ENCODE measurements at regions of chr1 and their contacts with region 1.

Region 1: GRCh38 chr1:15668089-15668754 is 15.9 kb upstream of the PLEKHM2 start:
- DNase-seq: no peak
- ATAC-seq: no peak
- H3K4me3 ChIP-seq: no peak overlapping the region
- H3K27ac ChIP-seq: no peak overlapping the region
- H3K4me1 ChIP-seq: peaks cover 0 to 15% (median 5%) of the 10 kb centered on the region in 9 donors
- H3K27me3 ChIP-seq: no peaks in the 10 kb centered on the region
- CTCF ChIP-seq: no peak

Region 2: DNA sequence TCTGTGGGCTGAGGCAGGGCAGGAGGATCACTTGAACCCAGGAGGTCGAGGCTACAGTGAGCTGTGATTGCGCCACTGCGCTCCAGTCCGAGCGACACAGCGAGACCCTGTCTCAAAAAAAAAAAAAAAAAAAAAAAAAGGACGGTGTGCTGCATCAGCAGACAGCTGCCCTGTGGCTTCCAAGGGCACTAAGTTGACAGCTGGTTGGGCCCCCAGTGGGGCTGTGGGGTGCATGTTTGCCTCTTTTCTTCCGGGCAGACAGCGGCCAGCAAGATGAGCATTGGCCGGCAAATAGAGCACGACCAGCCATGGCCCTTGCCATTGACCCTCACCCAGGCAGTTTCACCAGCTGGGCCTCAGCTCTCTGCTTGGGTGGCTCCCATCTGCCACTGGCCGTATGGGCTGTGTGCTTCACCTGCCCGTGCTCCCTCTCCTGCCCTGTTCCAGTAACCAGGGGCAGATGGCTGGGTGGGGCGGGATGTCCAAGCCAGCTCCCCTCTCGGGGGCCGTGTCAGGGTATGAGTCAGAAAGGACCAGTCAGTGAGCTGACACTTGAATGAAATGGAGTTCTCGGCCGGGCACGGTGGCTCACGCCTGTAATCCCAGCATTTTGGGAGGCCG is 55.5 kb after region 1 on chr1:
- intact Hi-C with region 1: loop called in 1 of 10 experiments (anchors 10 kb)
- DNase-seq: no peak
- ATAC-seq: no peak
- H3K4me3 ChIP-seq: no peak overlapping the region
- H3K27ac ChIP-seq: no peak overlapping the region
- H3K4me1 ChIP-seq: peaks cover 4 to 38% (median 12%) of the 10 kb centered on the region in 9 donors
- H3K27me3 ChIP-seq: no peaks in the 10 kb centered on the region
- CTCF ChIP-seq: no peak

Region 3: DNA sequence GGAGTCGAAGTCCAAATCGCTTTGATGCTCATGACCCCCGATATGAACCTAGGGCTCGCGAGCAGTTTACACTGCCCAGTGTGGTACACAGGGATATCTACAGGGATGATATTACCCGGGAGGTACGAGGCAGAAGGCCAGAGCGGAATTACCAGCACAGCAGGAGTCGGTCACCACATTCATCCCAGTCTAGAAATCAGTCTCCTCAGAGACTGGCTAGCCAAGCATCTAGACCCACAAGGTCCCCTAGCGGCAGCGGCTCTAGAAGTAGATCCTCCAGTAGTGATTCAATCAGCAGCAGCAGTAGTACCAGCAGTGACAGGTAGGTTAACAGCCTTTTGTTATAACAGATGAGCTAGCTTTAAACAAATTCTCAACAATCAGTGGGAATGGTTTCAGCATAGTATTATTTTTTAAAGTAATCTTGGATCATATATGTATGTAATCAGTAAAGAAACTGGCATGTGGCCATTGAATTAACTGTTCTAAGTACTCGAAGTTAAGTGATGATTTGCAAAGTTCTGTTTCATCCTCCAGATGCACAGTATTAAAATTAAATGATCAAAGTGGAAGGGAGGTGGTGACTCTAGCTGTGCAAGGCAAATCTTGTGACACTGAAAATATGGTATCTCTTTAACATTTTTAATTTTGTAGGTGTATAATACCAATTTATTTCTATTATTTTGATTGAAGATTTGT is 208.3 kb after region 1 on chr1:
- intact Hi-C with region 1: no loop called
- DNase-seq: no peak
- ATAC-seq: no peak
- H3K4me3 ChIP-seq: no peak overlapping the region
- H3K27ac ChIP-seq: no peak overlapping the region
- H3K4me1 ChIP-seq: peaks cover 0 to 37% (median 8%) of the 10 kb centered on the region in 9 donors
- H3K27me3 ChIP-seq: no peaks in the 10 kb centered on the region
- CTCF ChIP-seq: no peak